ENCODE measurements at regions of chr12 and their contacts with region 1.

Region 1: DNA sequence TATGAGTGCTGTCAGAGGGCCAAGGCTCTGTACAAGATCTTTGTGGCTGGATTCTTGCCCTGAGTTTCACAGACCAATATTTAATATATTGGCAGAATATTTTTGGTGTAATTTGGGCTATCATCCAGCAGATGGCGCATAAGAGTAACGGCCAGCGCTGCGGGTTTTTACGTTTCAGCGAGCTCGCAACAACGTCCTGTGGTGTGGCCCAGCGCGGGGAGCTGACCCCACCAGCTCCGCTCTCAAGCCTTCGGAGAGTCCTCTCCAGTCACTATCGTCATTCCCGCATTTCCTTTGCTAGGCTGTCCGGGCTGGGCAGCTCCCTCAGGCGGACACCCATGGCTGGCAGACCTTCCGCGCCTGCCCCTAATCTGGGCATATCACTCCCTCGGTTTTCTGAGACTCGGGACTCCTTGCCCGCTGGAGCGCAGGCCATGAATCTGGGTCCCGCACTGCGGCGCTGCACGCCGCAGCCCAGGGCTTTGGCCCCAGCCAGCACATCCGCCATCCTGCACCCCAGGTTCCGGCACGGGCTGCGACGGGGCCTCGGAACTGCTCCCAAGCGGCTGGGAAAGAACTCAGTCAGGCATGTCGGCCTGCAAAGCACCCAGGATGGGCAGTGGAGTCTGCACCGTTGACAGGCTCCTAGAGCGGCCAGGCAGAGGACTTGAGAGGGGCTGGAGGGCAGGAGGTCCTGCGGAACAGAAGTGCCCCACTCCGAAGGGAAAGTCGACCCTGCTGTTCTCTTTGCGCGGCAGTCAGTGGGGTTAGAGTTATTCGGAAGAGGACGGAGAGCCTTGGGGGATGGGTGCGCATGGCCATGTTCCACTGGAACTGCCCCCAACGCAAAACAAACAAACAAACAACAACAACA is 18.4 kb downstream of the OLR1 start:
- DNase-seq: peak; percentile 67
- H3K4me3 Mint-ChIP-seq: peak overlapping the region; percentile 95
- H3K27ac Mint-ChIP-seq: peak overlapping the region; percentile 86
- H3K4me1 Mint-ChIP-seq: peaks cover 11% of the 10 kb centered on the region
- H3K27me3 Mint-ChIP-seq: no peaks in the 10 kb centered on the region
- CTCF ChIP-seq: peak; percentile 84

Region 2: GRCh38 chr12:9977916-9978315 is 175.6 kb before region 1 on chr12:
- CTCF ChIA-PET with region 1: no interaction called
- intact Hi-C with region 1: no loop called
- DNase-seq: no peak
- H3K4me3 Mint-ChIP-seq: no peak overlapping the region
- H3K27ac Mint-ChIP-seq: no peak overlapping the region
- H3K4me1 Mint-ChIP-seq: no peaks in the 10 kb centered on the region
- H3K27me3 Mint-ChIP-seq: peaks cover 41% of the 10 kb centered on the region
- CTCF ChIP-seq: no peak

Region 3: DNA sequence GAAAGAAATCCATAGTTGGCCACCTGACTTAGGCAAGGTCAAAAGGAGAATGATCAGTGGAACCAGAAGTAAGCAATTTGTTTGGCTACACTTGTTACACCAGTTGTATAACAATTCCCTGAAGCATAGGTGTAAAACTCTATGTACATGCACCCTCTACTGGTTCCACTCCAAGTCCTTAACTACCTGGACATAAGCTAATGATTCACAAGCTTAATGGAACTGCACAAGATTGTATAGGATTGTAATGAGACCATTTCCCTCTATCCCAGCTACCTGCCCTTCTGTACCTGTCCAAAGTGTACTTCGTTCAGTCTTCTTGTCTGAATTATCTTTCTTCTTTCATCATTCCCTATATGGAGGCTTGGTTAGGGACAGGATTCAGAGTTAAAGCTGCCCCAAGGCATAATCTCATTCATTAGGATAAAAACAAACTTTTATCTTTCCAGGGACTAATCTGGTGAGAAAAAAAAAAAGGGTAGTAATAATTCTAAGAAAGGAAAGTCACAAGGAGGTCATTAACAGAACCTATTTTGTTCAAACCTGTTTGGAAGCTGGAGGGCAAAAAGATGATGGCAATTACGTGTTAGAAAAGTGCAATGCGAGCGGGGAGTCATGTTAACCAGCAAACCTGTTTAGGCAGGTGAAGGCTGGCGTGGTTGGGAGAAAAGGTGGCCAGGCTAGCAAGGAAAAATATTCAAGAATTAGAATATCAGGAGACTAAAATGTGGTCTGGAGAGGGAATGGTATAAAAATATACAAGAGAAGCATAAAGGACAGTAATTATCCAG is 22.5 kb after region 1 on chr12:
- CTCF ChIA-PET with region 1: interaction called, 12 read pairs
- intact Hi-C with region 1: no loop called
- DNase-seq: no peak
- H3K4me3 Mint-ChIP-seq: no peak overlapping the region
- H3K27ac Mint-ChIP-seq: no peak overlapping the region
- H3K4me1 Mint-ChIP-seq: peaks cover 19% of the 10 kb centered on the region
- H3K27me3 Mint-ChIP-seq: peaks cover 15% of the 10 kb centered on the region
- CTCF ChIP-seq: no peak

Region 4: DNA sequence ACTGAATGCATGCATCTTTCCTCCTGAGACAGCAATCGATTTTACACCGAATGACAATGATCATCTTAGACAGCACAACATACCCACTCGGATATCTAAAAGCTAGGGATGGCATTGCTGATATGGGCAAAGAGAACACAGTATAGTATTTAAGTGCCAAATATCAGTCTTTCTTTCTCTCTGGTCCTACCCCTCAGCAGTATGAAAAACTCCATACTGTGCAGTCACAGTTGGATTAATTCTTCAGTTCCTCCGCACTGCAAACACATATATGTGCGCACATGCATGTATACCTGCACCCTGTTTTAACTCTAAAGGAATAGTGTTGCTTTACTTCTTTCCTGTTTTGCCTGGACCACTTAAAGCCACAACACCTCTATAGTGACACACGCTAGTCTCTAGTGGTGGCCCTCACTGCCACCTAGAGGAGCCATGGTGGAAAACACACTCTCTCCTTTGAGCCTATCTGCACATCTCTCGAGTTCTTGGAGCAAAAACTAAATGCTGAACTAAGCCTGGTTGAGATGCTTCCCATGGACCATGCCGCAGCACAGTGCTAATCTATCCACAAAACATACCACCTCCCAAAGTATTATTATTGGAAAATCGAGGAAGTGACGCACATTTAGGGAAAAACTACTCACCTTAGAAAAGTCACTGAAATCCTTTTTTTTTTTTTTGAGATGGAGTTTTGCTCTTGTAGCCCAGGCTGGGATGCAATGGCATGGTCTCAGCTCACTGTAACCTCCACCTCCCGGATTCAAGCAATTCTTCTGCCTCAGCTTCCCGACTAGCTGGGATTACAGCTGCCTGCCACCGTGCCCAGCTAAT is 37.3 kb after region 1 on chr12:
- CTCF ChIA-PET with region 1: interaction called, 6 read pairs
- intact Hi-C with region 1: loop called (anchors 1 kb)
- DNase-seq: peak; percentile 57
- H3K4me3 Mint-ChIP-seq: no peak overlapping the region
- H3K27ac Mint-ChIP-seq: no peak overlapping the region
- H3K4me1 Mint-ChIP-seq: peaks cover 9% of the 10 kb centered on the region
- H3K27me3 Mint-ChIP-seq: peaks cover 18% of the 10 kb centered on the region
- CTCF ChIP-seq: peak; percentile 61

Region 5: DNA sequence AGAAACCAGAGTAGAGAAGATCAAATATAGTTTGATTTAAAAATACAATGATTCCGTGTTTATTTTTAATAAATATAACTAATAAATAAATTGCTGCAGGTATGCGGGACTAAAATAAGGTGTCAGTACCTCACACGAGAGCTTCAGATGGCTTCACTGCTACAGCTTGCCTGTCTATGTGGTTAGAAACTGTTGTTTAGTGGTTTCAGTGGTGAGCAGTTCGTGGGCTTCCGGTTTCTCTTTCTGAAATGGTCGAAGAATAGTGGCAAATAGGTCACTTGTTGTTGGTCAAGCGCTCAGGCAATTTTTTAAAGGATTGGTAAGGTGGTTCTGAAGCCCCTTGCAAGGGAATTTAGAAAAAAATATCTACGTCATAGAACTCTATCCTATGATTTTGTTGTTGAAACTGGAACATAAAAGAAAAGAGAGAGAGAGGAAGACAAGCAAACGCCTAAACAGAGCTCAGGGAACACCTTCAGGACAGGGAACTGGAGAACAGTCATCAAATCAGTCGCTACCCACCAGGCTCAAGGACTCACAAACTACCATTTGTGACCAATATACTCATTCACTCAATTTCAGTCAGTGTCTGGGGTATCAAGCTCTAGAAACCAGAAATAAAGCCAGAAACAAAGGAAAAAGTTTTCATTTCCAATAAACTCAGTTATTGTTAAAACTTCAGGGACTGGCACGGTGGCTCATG is 90.5 kb after region 1 on chr12:
- CTCF ChIA-PET with region 1: no interaction called
- intact Hi-C with region 1: no loop called
- DNase-seq: no peak
- H3K4me3 Mint-ChIP-seq: no peak overlapping the region
- H3K27ac Mint-ChIP-seq: no peak overlapping the region
- H3K4me1 Mint-ChIP-seq: no peaks in the 10 kb centered on the region
- H3K27me3 Mint-ChIP-seq: no peaks in the 10 kb centered on the region
- CTCF ChIP-seq: no peak

Region 6: DNA sequence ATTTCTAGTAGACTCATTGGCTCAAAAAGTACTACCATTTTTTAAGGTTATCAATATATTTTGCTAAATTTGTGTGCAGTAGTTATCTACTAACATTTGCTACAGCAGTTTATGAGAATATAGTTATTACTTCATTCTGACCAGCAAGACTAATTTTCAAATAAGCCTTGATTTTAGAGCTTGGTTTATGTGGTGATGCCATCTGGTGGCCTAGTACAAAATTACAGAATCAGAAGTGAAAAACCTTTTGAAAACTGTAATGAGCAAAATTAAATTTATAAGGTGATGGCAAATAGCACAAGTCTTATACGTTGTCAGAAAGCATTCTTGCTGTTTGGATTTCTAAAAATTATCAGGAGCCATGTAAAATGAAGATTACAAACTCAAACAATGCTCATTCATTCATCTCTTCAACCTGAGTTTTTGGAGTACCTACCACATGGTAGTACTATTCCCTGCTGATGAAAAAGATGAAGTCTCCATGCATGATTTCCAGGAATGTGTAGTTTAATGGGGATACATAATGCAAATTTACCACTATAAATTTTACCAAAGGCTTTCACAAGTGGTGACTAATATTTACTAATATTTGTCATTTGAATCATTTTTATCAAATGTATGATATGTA is 408.9 kb after region 1 on chr12:
- CTCF ChIA-PET with region 1: interaction called, 3 read pairs
- intact Hi-C with region 1: loop called (anchors 5 kb)
- DNase-seq: peak; percentile 45
- H3K4me3 Mint-ChIP-seq: no peak overlapping the region
- H3K27ac Mint-ChIP-seq: no peak overlapping the region
- H3K4me1 Mint-ChIP-seq: no peaks in the 10 kb centered on the region
- H3K27me3 Mint-ChIP-seq: no peaks in the 10 kb centered on the region
- CTCF ChIP-seq: peak; percentile 63

Measured in Calu3 (cell line).